CD8-positive, alpha-beta T cell (primary cell): ENCODE measurements at regions of chr6 and their contacts with region 1.

Region 1: GRCh38 chr6:37051138-37052026 is 45.9 kb downstream of the FGD2 start:
- DNase-seq: peak; percentile 83 to 94 (median 91)
- ATAC-seq: peak; percentile 71
- H3K4me3 ChIP-seq: peak overlapping the region in 1 of 2 experiments; percentile 44
- H3K4me3 Mint-ChIP-seq: peak overlapping the region; percentile 58
- H3K27ac ChIP-seq: peak overlapping the region; percentile 59 to 94
- H3K27ac Mint-ChIP-seq: peak overlapping the region; percentile 96
- H3K4me1 ChIP-seq: peaks cover 59% of the 10 kb centered on the region
- H3K4me1 Mint-ChIP-seq: peaks cover 58% of the 10 kb centered on the region
- H3K27me3 ChIP-seq: no peaks in the 10 kb centered on the region
- H3K27me3 Mint-ChIP-seq: no peaks in the 10 kb centered on the region
- CTCF ChIP-seq: peak; percentile 83

Region 2: DNA sequence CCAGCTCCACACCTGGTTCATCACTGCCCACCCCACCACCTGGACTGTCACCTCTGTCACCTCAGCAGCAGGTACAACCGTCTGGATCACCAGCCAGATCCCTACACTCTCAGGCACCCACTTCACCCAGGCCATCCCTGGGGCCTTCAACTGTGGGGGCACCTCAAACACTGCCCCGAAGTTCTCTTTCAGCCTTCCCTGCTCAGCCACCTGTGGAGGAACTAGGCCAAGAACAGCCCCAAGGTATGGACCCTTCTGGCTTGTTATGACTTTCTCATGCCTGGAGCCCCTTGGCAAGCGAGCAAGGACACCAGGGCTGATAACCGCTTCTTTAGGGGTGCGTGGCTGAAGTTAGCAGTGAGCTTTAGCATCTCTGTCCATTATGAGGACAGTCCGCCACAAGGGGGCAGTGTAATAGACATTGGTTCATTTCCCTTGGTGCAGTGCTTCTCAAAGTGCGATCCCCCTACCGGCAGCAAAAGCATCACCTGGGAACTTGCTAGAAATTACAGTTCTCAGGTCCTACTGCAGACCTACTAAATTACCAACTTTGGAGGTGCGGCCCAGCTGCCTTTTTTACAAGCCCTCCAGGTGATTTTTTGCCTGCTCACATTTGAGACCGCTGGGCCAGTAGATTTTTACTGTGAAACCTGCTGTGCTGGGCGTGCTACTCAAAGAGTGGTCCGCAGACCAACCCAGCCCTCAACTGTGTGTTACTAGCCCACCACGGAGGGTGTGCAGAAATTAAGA is 749.0 kb before region 1 on chr6:
- CTCF ChIA-PET with region 1: no interaction called
- POLR2A ChIA-PET with region 1: no interaction called
- intact Hi-C with region 1: no loop called
- DNase-seq: peak; percentile 84 to 97 (median 93)
- ATAC-seq: peak; percentile 99
- H3K4me3 ChIP-seq: no peak overlapping the region
- H3K4me3 Mint-ChIP-seq: no peak overlapping the region
- H3K27ac ChIP-seq: no peak overlapping the region
- H3K27ac Mint-ChIP-seq: no peak overlapping the region
- H3K4me1 ChIP-seq: no peaks in the 10 kb centered on the region
- H3K4me1 Mint-ChIP-seq: peaks cover 6% of the 10 kb centered on the region
- H3K27me3 ChIP-seq: peaks cover 0 to 2% of the 10 kb centered on the region in 2 experiments
- H3K27me3 Mint-ChIP-seq: peaks cover 14% of the 10 kb centered on the region
- CTCF ChIP-seq: peak; percentile 99

Region 3: DNA sequence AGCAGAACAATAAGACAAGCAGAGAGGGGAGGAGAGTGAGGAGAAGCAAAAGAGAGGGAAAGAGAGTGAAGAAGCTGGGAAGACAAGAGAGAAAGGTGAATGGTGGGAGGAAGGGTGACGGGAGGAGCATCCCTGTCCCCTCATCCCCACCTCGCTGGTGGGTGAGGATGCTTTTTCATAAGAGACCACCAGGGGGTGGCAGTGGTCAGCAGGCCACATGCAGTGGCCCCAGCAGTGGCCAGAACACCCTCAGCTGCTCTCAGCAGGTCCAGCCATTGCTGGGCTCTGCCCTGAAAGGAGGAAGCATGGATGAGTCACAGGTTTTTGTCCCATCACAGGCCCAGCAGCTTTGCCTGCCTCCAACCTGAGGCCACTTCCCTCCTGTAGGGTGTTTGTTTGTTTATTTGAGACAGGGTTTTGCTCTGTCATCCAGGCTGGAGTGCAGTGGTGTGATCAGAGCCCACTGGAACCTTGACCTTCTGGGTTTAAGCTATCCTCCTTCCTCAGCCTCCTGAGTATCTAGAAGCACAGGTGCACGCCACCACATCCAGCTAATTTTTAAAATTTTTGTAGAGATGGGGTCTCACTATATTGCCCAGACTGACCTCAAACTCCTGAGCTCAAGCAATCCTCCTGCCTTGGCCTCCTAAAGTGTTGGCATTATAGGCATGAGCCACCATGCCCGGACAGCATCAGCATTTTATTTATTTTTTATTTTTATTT is 22.0 kb before region 1 on chr6:
- CTCF ChIA-PET with region 1: interaction called, 281 read pairs
- POLR2A ChIA-PET with region 1: interaction called, 10 read pairs
- intact Hi-C with region 1: no loop called
- DNase-seq: peak in 7 of 9 experiments; percentile 15 to 72 (median 49)
- ATAC-seq: peak; percentile 67
- H3K4me3 ChIP-seq: no peak overlapping the region
- H3K4me3 Mint-ChIP-seq: no peak overlapping the region
- H3K27ac ChIP-seq: no peak overlapping the region
- H3K27ac Mint-ChIP-seq: no peak overlapping the region
- H3K4me1 ChIP-seq: peaks cover 7% of the 10 kb centered on the region
- H3K4me1 Mint-ChIP-seq: peaks cover 10% of the 10 kb centered on the region
- H3K27me3 ChIP-seq: no peaks in the 10 kb centered on the region
- H3K27me3 Mint-ChIP-seq: no peaks in the 10 kb centered on the region
- CTCF ChIP-seq: peak; percentile 59

Region 4: DNA sequence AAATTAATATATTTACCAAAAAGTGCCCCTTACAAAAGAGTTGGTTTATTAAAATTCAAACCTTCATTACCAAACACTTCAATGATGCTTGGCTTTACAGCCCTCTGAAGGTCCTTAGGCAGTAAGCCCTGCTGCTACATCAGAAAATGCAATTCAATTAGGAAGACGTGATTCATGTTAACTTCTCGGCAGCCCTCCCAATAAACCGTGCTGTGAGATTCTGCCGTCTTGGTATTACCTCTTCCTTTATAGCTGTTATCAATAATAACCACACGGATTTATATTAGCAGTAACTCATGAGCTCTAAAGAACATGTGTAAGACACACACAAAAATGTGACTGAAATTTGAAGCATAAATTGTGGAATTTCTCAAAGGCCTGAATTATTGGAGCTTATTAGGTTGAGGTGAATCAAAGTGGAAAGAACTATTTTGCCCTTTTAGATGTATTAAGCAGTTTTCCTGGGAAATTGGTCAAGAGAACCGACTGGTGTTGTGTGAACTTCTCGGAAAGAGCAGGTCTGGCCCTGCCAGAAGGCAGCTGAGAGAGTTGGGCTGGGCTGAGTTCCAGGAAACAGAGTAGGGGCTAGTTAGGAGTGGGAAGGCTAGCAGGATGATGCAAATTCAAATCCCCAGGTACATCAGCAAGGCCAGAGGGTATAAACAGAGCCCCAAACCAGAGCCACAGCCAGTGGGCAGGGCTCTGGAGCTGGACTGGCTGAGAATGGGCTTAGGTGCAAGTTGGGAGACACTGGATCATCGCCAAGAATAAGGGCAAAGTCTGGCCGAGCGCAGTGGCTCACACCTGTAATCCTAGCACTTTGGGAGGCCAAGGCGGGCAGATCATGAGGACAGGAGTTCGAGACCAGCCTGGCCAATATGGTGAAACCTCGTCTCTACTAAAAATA is 12.8 kb before region 1 on chr6:
- CTCF ChIA-PET with region 1: interaction called, 10 read pairs
- POLR2A ChIA-PET with region 1: no interaction called
- intact Hi-C with region 1: no loop called
- DNase-seq: no peak
- ATAC-seq: no peak
- H3K4me3 ChIP-seq: no peak overlapping the region
- H3K4me3 Mint-ChIP-seq: no peak overlapping the region
- H3K27ac ChIP-seq: no peak overlapping the region
- H3K27ac Mint-ChIP-seq: no peak overlapping the region
- H3K4me1 ChIP-seq: no peaks in the 10 kb centered on the region
- H3K4me1 Mint-ChIP-seq: peaks cover 9% of the 10 kb centered on the region
- H3K27me3 ChIP-seq: no peaks in the 10 kb centered on the region
- H3K27me3 Mint-ChIP-seq: no peaks in the 10 kb centered on the region
- CTCF ChIP-seq: no peak

Region 5: DNA sequence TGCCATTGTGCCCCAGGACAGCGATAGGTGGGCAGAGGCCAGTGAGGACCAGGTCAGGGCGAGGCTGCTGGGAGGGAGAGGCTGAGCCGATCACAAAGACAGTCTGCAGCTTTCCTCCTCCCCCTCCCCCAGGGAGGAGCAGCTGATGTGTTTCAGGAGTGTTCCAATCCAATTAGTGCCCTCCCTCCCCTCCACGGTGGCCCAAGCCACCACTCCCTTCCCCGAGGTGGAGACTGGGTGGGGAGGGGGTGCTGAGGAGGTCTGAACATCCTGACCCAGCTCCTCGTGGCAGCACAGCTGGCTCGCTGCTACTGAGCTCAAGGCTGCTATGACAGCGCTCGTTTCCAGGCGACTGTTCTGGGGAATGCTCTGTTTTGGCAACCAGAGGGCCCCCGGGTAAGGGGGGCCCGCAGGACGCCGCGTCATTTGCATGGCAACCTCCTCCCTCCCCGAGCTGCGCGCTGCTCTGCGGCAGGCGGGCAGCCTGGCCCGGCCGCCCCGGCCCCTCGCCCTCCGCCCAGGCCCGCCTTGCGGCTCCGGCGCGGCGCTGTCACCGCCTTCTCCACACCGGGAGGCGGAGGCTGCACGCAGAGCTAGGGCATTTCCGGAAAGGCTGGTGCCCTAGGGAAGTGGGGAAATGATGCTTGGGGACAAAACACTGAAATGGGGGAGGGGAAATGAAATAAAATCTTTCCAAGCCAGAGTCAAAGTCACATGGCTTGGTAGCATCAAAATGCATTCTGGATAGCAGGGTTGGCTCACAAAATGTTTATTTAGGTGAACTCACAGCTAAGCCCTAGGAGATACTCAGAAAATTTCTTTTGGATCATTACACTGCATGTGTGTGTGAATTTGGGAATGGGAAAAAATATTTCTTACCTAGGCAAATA is 51.1 kb after region 1 on chr6:
- CTCF ChIA-PET with region 1: interaction called, 4 read pairs
- POLR2A ChIA-PET with region 1: no interaction called
- intact Hi-C with region 1: loop called (anchors 2 kb)
- DNase-seq: peak; percentile 51 to 91 (median 74)
- ATAC-seq: peak; percentile 90
- H3K4me3 ChIP-seq: peak overlapping the region; percentile 36 to 45
- H3K4me3 Mint-ChIP-seq: peak overlapping the region; percentile 78
- H3K27ac ChIP-seq: peak overlapping the region; percentile 48 to 66
- H3K27ac Mint-ChIP-seq: peak overlapping the region; percentile 75
- H3K4me1 ChIP-seq: peaks cover 15% of the 10 kb centered on the region
- H3K4me1 Mint-ChIP-seq: peaks cover 25% of the 10 kb centered on the region
- H3K27me3 ChIP-seq: no peaks in the 10 kb centered on the region
- H3K27me3 Mint-ChIP-seq: no peaks in the 10 kb centered on the region
- CTCF ChIP-seq: no peak

Region 6: DNA sequence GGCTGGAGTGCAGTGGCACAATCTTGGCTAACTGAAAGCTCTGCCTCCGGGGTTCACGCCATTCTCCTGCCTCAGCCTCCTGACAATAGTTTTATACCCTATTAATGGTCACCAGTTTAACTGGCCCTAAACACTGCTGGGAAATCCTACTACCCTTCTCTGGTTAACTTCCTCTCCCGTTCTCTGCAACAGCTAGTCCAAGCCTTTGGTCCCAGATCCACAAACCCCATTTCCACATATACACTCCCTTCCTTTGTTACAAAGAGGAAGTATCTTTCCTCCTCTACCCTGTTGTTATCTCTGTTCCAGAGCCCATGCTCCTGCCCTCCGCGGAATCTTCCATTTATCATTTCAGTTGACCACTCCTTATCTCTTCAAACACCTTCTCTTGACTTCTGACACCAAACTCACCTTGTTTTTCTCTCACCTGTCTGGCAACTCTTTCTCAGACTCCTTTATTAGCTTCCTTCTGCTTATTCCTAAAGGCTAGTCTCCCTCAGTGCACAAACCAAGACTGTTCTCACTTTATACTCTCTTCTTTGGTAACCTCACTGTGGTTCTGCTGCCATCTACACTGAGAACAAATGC is 181.1 kb after region 1 on chr6:
- CTCF ChIA-PET with region 1: no interaction called
- POLR2A ChIA-PET with region 1: no interaction called
- intact Hi-C with region 1: no loop called
- DNase-seq: no peak
- ATAC-seq: no peak
- H3K4me3 ChIP-seq: no peak overlapping the region
- H3K4me3 Mint-ChIP-seq: no peak overlapping the region
- H3K27ac ChIP-seq: no peak overlapping the region
- H3K27ac Mint-ChIP-seq: no peak overlapping the region
- H3K4me1 ChIP-seq: no peaks in the 10 kb centered on the region
- H3K4me1 Mint-ChIP-seq: no peaks in the 10 kb centered on the region
- H3K27me3 ChIP-seq: no peaks in the 10 kb centered on the region
- H3K27me3 Mint-ChIP-seq: peaks cover 7% of the 10 kb centered on the region
- CTCF ChIP-seq: no peak